Activated CD8-positive, alpha-beta T cell treated with anti-CD3 and anti-CD28 coated beads for 36 hours (primary cell): ENCODE measurements at regions of chr1 and their contacts with region 1.

Region 1: GRCh38 chr1:153572569-153573015 is 6.9 kb upstream of the S100A2 start:
- DNase-seq: peak; percentile 78
- ATAC-seq: peak; percentile 79
- H3K4me3 Mint-ChIP-seq: no peak overlapping the region
- H3K27ac Mint-ChIP-seq: peak overlapping the region; percentile 69
- H3K4me1 Mint-ChIP-seq: peaks cover 34% of the 10 kb centered on the region
- H3K27me3 Mint-ChIP-seq: peaks cover 8% of the 10 kb centered on the region
- CTCF ChIP-seq: peak; percentile 67

Region 2: DNA sequence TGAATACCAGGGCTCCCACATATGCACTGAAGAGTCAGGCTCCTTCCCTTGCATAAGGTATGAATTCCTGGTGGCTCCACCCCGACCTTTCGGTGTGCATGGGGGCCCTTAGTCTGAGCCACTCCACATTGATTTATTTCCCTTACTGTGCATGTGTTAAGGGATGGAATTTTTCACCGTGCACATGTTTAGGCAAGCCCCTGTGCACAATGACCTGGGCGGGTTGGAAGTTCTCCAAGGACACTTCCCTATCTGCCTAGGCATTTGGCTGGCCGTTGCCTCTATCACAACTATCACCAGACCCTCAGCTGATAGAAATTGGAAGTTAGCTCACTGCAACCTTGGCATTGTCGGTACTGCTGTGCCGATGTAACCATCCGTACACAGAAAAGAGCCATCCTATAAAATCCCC is 46.5 kb before region 1 on chr1:
- CTCF ChIA-PET with region 1: interaction called, 191 read pairs
- POLR2A ChIA-PET with region 1: interaction called, 80 read pairs
- intact Hi-C with region 1: no loop called
- DNase-seq: no peak
- ATAC-seq: no peak
- H3K4me3 Mint-ChIP-seq: no peak overlapping the region
- H3K27ac Mint-ChIP-seq: no peak overlapping the region
- H3K4me1 Mint-ChIP-seq: peaks cover 13% of the 10 kb centered on the region
- H3K27me3 Mint-ChIP-seq: no peaks in the 10 kb centered on the region
- CTCF ChIP-seq: no peak

Region 3: GRCh38 chr1:153550827-153551500 is 21.6 kb before region 1 on chr1:
- CTCF ChIA-PET with region 1: interaction called, 24 read pairs
- POLR2A ChIA-PET with region 1: interaction called, 4 read pairs
- intact Hi-C with region 1: no loop called
- DNase-seq: no peak
- ATAC-seq: no peak
- H3K4me3 Mint-ChIP-seq: no peak overlapping the region
- H3K27ac Mint-ChIP-seq: no peak overlapping the region
- H3K4me1 Mint-ChIP-seq: peaks cover 12% of the 10 kb centered on the region
- H3K27me3 Mint-ChIP-seq: no peaks in the 10 kb centered on the region
- CTCF ChIP-seq: no peak

Region 4: DNA sequence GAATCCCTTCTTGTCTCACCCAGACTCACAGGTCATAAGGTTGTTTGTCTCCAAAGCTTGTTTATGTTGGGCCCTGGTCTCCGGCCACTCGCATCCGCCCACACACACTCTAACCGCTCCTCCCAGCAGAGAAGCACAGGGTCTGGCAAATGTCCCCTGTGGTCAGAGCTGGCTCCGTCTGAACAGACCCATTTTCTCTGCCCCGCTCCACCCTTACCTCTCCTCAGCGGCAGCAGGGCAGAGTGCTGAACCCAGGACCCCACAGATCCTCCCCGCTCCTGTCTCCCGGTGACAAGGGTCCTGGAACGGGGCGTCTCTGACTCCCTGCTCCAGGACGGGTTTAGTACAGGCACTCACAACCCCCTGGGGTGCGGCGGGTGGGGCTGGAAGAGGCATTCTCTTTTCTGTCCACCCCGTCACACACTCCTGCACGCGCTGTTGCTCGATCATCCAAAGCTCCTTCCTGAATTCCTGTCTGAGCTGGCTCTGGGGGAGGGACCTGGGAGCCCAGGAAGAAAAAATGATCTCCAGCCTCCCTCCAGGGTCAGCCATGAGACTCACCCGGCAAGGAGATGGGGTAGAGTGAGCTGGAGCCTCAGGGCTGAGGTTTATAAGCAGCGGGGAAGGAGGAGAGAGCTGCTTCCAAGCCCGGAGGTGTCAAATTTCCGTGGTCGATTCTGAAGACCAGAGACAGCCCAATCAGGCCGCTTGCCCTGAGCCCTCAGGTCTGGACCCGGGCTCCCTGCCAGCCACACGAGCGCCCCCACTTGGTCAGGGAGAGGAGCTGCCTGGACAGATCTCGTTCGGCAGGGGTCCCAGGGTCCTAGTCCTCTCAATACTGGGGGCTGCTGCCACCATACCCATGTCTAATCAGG is 54.6 kb after region 1 on chr1 and contains the start of gene S100A13:
- CTCF ChIA-PET with region 1: interaction called, 13 read pairs
- POLR2A ChIA-PET with region 1: no interaction called
- intact Hi-C with region 1: no loop called
- DNase-seq: peak; percentile 44
- ATAC-seq: peak; percentile 63
- H3K4me3 Mint-ChIP-seq: no peak within 1 kb of the TSS
- H3K27ac Mint-ChIP-seq: no peak within 1 kb of the TSS
- H3K4me1 Mint-ChIP-seq: peaks cover 14% of the 10 kb centered on the region
- H3K27me3 Mint-ChIP-seq: peaks cover 9% of the 10 kb centered on the region
- CTCF ChIP-seq: peak; percentile 58
- total RNA-seq, gene S100A13: 8.1 to 9.4 TPM